Mammary epithelial cell (primary cell): ENCODE measurements at regions of chr1 and their contacts with region 1.

Region 1: GRCh38 chr1:45883633-45884032 is 80.2 kb downstream of the MAST2 start:
- DNase-seq: no peak
- H3K4me3 ChIP-seq: no peak overlapping the region
- H3K27ac ChIP-seq: no peak overlapping the region
- H3K4me1 ChIP-seq: peaks cover 5% of the 10 kb centered on the region
- H3K27me3 ChIP-seq: no peaks in the 10 kb centered on the region
- CTCF ChIP-seq: no peak

Region 2: DNA sequence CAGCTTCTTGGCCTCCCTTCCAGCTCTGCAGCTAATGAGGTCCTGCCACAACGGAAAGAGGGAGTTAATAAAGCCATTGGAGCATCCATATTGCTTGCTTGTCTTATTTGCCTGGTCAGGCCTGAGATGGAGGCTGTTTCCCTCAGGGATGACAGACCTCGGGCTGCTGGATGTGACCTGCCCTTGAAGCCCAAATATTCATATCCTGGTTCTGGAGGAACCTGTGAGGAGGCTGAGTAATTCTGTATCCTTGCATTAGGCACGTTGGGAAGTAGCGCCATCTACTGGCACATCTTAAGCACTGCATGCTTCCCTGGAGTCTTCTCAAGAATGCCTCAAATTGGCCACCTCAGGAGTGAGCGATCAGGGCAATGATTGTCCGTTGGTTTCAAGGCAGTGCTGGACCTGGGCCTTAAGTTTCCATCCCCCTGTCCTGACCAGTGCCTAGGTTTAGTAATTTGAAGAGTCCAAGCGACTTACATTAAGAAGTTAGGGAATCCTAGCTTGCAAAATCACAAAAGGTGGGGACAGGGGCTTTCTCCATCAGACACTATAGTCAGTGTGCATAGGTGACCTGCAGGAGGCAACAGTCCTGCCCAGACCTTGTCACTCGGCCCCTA is 313.6 kb before region 1 on chr1:
- CTCF ChIA-PET with region 1: no interaction called
- dilution Hi-C with region 1: no loop called
- in situ Hi-C with region 1: no loop called
- intact Hi-C with region 1: loop called (anchors 1 kb)
- DNase-seq: peak; percentile 62
- H3K4me3 ChIP-seq: no peak overlapping the region
- H3K27ac ChIP-seq: no peak overlapping the region
- H3K4me1 ChIP-seq: no peaks in the 10 kb centered on the region
- H3K27me3 ChIP-seq: no peaks in the 10 kb centered on the region
- CTCF ChIP-seq: peak; percentile 99 to 100

Region 3: DNA sequence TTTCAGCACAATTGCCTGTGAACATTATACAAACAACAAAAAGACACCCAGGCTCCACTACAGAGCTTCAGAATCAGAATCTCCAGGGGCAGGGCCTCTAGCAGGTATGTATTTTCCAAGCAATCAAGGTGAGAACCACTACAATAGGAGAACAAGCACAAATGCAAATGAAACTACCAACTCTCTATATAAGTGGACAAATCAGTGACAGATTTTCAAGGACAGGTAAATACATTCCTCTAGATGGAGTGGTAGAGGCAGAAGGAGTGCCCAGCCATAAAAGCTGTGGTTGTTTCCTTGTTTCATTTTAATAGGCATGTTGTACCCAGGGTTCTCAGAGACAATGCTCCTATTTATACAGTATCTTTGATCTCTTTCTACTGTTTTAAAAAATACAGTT is 239.7 kb before region 1 on chr1:
- CTCF ChIA-PET with region 1: no interaction called
- dilution Hi-C with region 1: no loop called
- in situ Hi-C with region 1: no loop called
- intact Hi-C with region 1: loop called (anchors 1 kb)
- DNase-seq: peak; percentile 31
- H3K4me3 ChIP-seq: no peak overlapping the region
- H3K27ac ChIP-seq: peak overlapping the region; percentile 26
- H3K4me1 ChIP-seq: no peaks in the 10 kb centered on the region
- H3K27me3 ChIP-seq: no peaks in the 10 kb centered on the region
- CTCF ChIP-seq: peak; percentile 15 to 50

Region 4: GRCh38 chr1:45750298-45751038 is 133.2 kb before region 1 on chr1 and contains the start of gene IPP:
- CTCF ChIA-PET with region 1: no interaction called
- dilution Hi-C with region 1: no loop called
- in situ Hi-C with region 1: no loop called
- intact Hi-C with region 1: loop called (anchors 2 kb)
- DNase-seq: peak; percentile 98
- H3K4me3 ChIP-seq: peak within 1 kb of the TSS; percentile 57 to 68 (median 63)
- H3K27ac ChIP-seq: peak within 1 kb of the TSS; percentile 84
- H3K4me1 ChIP-seq: no peaks in the 10 kb centered on the region
- H3K27me3 ChIP-seq: no peaks in the 10 kb centered on the region
- CTCF ChIP-seq: peak in 1 of 2 donors; percentile 50
- total RNA-seq, gene IPP: 14.0 to 14.5 TPM

Region 5: DNA sequence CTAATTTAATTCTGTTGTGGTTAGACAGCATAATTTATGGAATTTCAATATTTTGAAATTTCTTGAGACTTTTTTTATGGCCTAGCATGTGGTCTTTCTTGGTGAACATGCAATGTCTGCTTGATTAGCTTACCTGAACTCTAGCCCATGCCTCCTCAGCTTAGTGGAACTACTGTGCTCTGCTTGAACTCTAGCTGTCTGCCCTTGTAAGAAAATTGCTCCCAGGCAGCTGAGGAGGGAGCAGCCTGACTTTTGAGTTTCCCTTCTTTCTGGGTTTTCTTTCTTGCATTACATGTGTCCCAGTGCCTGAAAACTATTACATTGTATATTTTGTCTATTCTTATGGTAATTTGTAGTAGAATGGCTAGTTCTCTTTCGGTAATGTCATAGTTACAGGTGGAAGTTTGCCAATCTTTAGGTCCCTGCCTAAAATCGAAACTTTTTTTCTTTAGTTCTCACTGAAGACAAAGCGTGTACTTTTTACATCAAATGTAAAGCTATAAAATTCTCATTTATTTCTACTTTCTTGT is 25.0 kb after region 1 on chr1:
- CTCF ChIA-PET with region 1: no interaction called
- dilution Hi-C with region 1: no loop called
- in situ Hi-C with region 1: no loop called
- intact Hi-C with region 1: no loop called
- DNase-seq: no peak
- H3K4me3 ChIP-seq: no peak overlapping the region
- H3K27ac ChIP-seq: no peak overlapping the region
- H3K4me1 ChIP-seq: peaks cover 7% of the 10 kb centered on the region
- H3K27me3 ChIP-seq: no peaks in the 10 kb centered on the region
- CTCF ChIP-seq: no peak